Activated CD8-positive, alpha-beta T cell treated with anti-CD3 and anti-CD28 coated beads for 36 hours (primary cell): ENCODE measurements at regions of chr12 and their contacts with region 1.

Region 1: GRCh38 chr12:57111031-57111734 is at the start of gene STAT6:
- DNase-seq: peak; percentile 91
- ATAC-seq: peak; percentile 57
- H3K4me3 Mint-ChIP-seq: peak within 1 kb of the TSS; percentile 98
- H3K27ac Mint-ChIP-seq: peak within 1 kb of the TSS; percentile 99
- H3K4me1 Mint-ChIP-seq: peaks cover 48% of the 10 kb centered on the region
- H3K27me3 Mint-ChIP-seq: no peaks in the 10 kb centered on the region
- CTCF ChIP-seq: no peak
- total RNA-seq, gene STAT6: 207 to 209 TPM

Region 2: DNA sequence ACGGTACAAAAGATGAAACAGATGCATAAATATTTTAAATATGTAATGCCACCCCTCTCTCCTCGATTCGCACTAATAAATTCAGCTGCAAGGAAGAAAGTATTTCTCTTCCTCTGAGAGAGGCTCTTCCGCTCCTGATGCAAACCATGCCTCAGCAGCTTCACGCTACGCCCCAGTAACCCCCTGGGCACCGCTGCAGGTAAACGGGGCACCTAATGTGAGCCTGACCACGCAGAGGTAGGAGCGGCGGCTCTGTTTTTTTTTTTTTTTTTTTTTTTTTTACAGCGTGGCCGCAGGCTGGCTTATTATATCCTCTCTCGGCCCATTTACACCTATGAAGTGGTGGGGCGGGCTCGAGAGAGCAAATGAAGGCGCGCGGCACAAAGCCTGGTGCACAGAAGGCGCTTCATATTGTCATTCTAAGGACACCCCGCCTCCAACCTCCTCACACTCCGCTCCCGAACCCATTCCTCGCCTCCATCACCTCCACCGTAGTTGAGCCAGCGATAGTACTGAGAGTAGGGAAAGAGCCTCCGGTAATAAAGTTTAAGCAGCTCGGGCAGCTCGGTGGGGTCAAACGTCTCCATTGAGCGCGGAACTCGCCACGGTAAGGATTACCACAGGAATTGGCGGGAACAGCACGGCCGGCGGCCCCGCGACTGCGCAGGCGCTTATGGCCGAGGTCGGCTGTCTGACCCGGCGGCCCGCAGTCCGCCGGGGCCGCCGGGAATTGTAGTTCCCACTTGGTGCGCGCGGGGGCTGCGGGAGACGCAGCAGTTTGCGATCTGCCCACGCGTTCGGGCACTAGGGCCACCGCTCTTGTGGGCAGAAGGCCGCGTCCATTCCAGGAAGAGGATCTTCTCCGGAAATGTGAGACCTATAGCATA is 359.2 kb before region 1 on chr12 and contains the start of gene PRIM1:
- CTCF ChIA-PET with region 1: interaction called, 17 read pairs
- POLR2A ChIA-PET with region 1: interaction called, 10 read pairs
- intact Hi-C with region 1: no loop called
- DNase-seq: peak; percentile 94
- ATAC-seq: peak; percentile 93
- H3K4me3 Mint-ChIP-seq: peak within 1 kb of the TSS; percentile 95
- H3K27ac Mint-ChIP-seq: peak within 1 kb of the TSS; percentile 99
- H3K4me1 Mint-ChIP-seq: peaks cover 32% of the 10 kb centered on the region
- H3K27me3 Mint-ChIP-seq: no peaks in the 10 kb centered on the region
- CTCF ChIP-seq: no peak
- total RNA-seq, gene PRIM1: 80.3 to 86.7 TPM

Region 3: DNA sequence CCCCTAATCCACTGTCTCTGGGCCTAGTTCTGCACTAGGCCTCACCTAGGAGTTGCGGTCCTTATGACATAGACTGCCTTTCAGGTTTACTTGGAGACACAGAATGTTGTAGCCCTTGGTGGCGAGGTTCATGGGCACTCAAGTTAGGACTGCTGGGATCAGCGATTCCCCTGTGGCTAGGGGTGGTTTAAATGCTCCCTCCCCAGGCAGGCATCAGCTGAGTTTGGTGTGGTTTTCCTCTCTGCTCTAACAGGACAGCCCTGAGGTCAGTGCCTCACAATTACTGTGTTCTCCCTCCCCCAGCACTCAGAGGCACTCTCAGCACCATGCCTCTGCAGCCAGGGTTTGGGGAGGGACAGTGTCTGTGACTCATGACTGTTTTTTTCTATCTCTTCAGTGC is 131.6 kb before region 1 on chr12:
- CTCF ChIA-PET with region 1: no interaction called
- POLR2A ChIA-PET with region 1: no interaction called
- intact Hi-C with region 1: no loop called
- DNase-seq: no peak
- ATAC-seq: no peak
- H3K4me3 Mint-ChIP-seq: no peak overlapping the region
- H3K27ac Mint-ChIP-seq: no peak overlapping the region
- H3K4me1 Mint-ChIP-seq: no peaks in the 10 kb centered on the region
- H3K27me3 Mint-ChIP-seq: no peaks in the 10 kb centered on the region
- CTCF ChIP-seq: no peak

Region 4: DNA sequence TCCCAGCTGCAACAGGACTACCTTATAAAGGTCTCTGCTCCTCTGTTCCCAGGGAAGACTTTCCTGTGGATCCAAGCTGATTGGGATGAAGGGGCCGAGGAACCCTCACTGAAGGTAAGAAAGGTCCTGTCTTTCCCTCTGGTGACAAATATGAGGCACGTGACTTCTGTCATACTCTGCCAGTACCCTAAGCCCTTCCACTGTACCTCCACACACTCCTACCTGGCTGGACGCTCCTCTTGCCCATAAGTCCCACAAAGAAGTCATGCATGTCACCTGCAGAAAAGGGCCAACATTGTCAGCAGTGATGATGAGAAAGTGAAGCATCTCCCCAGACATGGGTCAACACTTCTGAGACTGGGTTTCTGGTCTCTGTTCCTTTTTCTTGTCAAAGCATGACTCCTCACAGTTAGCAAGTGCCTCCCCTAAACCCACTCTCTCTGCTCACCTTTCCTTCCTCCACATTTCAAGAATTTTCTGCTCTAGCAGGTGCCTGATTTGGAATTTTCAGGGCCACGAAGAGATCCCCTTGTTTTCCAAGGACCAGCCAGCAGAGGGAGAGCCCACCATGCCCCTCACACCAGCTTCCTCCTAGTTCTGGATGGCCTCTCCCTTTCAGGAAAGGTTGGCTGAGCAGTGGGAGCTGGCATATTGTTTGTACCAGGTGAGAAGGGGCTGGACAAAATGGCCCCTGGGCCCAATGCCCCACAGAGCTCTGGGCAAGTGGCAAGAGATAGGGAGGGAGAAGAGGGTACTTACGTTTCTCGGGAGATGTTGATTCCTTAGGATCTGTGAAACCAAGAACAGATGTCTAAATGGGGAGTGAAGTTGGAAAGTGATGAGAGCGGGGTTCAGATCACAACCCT is 98.3 kb before region 1 on chr12:
- CTCF ChIA-PET with region 1: interaction called, 123 read pairs
- POLR2A ChIA-PET with region 1: interaction called, 7 read pairs
- intact Hi-C with region 1: loop called (anchors 5 kb)
- DNase-seq: no peak
- ATAC-seq: no peak
- H3K4me3 Mint-ChIP-seq: no peak overlapping the region
- H3K27ac Mint-ChIP-seq: no peak overlapping the region
- H3K4me1 Mint-ChIP-seq: peaks cover 23% of the 10 kb centered on the region
- H3K27me3 Mint-ChIP-seq: no peaks in the 10 kb centered on the region
- CTCF ChIP-seq: no peak

Region 5: DNA sequence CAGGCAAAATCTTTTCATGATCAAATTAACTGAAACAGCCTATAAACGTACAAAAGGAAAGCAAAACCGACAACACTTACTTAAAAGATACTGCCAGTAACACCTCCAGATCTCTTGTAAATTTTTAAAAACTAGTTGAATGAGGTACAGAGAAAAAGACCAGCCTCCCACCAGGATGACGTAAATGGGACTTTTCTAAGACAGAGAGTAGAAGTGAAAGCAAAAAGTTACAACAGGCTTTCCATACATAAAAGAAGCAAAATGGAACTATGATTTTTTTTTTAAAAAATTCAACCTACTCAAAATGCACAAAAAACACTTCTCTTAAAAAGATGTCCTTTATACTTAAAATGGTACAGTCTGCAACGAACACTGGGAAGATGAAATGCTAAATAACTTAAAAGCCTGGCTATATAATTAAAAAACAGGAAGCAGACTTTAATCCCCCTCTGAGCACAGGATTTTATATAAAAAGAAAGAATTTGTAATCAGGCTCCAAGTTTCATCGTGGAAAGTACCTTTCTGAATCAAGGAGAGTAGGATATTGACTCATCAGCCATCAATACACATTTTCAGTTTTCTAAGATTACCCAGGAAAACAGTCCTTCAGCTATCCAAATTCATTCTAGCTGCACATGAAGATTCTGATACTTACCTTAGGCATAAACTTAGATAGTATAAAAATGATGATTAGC is 47.0 kb before region 1 on chr12:
- CTCF ChIA-PET with region 1: interaction called, 147 read pairs
- POLR2A ChIA-PET with region 1: interaction called, 58 read pairs
- intact Hi-C with region 1: loop called (anchors 2 kb)
- DNase-seq: peak; percentile 86
- ATAC-seq: peak; percentile 83
- H3K4me3 Mint-ChIP-seq: peak overlapping the region; percentile 67
- H3K27ac Mint-ChIP-seq: peak overlapping the region; percentile 90
- H3K4me1 Mint-ChIP-seq: peaks cover 63% of the 10 kb centered on the region
- H3K27me3 Mint-ChIP-seq: no peaks in the 10 kb centered on the region
- CTCF ChIP-seq: no peak

Region 6: GRCh38 chr12:57088459-57089248 is 22.5 kb before region 1 on chr12 and contains the start of gene NAB2:
- CTCF ChIA-PET with region 1: interaction called, 167 read pairs
- POLR2A ChIA-PET with region 1: interaction called, 417 read pairs
- intact Hi-C with region 1: loop called (anchors 2 kb)
- DNase-seq: peak; percentile 93
- ATAC-seq: peak; percentile 45
- H3K4me3 Mint-ChIP-seq: peak within 1 kb of the TSS; percentile 90
- H3K27ac Mint-ChIP-seq: peak within 1 kb of the TSS; percentile 97
- H3K4me1 Mint-ChIP-seq: peaks cover 53% of the 10 kb centered on the region
- H3K27me3 Mint-ChIP-seq: no peaks in the 10 kb centered on the region
- CTCF ChIP-seq: no peak
- total RNA-seq, gene NAB2: 69.3 to 70.8 TPM

Region 7: GRCh38 chr12:57238854-57239554 is 127.8 kb after region 1 on chr12:
- CTCF ChIA-PET with region 1: interaction called, 24 read pairs
- POLR2A ChIA-PET with region 1: interaction called, 3 read pairs
- intact Hi-C with region 1: no loop called
- DNase-seq: peak; percentile 92
- ATAC-seq: peak; percentile 73
- H3K4me3 Mint-ChIP-seq: peak overlapping the region; percentile 83
- H3K27ac Mint-ChIP-seq: no peak overlapping the region
- H3K4me1 Mint-ChIP-seq: peaks cover 62% of the 10 kb centered on the region
- H3K27me3 Mint-ChIP-seq: peaks cover 39% of the 10 kb centered on the region
- CTCF ChIP-seq: peak; percentile 100